Posterior cingulate gyrus (tissue), 11 donors: ENCODE measurements at regions of chr2 and their contacts with region 1.

Region 1: DNA sequence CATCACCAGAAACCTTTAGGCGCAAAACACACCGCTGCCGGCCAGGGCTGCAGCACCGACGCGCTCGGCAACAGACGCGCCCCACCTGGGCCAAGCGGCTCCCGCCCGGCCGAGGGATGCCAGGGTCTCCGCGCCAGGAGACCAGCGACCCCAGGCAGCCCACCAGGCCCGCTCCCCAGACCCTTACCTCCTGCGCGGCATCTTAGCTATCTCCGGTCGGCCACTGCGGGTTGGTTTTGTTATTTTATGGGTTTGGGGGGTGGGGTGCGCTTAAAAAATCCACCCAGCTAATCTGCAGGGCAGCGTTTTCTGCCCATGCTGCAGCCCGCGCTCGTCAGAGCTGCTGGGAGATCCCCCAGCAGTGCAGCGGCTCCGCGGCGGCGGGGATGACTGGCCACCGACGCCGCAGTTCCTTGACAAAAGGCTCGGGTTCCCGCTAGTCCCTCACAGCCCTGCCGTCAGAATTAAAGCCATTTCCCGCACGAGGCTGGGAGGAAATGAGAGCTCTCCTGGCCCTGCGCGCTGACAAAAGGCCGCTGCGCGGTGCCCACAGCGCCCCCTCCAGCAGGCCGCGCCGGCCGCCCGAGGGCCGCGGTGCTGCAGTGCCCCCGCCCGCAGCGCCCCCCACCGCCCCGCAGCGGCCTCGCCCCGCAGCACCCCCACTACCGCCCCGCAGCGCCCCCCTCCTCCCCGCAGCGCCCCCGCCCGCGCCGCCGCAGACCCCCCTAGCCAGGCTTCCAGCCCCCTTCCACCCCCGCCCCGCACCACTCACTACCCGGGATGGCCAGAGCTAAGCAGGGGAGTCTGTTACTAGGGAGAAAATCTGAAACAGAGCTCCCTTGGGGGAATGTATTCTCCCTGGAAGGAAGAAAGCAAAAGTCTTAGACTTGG is at the start of gene ADD2:
- DNase-seq: peak; percentile 37 to 94 (median 62)

Region 2: DNA sequence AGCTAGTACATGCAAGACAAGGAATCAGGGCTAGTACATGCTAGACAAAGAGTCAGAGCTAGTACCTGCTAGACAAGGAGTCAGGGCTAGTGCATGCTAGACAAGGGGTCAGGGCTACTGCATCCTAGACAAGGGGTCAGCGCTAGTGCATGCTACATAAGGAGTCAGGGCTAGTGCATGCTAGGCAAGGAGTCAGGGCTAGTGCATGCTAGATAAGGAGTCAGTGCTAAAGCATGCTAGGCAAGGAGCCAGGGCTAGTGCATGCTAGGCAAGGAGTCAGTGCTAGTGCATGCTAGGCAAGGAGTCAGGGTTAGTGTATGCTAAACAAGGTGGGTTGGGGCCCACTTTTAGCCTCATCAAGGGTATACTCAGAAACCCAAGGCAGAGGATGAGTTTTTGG is 376.0 kb before region 1 on chr2:
- intact Hi-C with region 1: no loop called
- DNase-seq: no peak

Region 3: GRCh38 chr2:70460333-70460732 is 307.6 kb before region 1 on chr2:
- intact Hi-C with region 1: no loop called
- DNase-seq: no peak

Region 4: DNA sequence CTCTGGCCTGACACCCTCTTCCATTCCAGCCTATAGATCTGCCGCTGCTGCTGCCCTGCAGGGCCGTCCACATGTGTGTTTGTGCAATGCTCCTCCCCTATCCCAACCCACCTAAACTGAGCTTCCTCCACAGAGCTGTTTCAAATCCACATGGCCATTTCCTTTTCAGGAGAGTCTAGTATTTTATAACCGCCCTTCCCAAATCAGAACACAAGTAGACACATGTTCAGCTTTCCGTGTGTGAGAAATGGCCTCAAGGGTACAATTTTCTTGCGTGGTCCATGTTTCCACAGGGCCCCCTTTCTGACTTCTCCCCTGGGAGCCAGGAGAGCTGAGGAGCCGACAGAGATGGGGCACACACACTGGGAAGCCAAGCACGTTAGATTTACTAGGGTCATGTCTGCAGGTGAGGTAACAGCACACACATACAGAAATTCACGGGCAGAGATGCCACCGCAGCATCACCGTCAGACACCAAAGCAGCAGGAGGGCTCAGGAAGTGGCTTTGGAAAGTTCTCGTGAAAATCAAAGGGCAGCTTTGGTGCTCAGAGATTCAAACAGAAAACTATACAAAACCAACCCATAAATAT is 111.4 kb before region 1 on chr2:
- intact Hi-C with region 1: loop called (anchors 5 kb)
- DNase-seq: no peak

Region 5: GRCh38 chr2:70806013-70806412 is 38.1 kb after region 1 on chr2:
- intact Hi-C with region 1: no loop called
- DNase-seq: no peak